Heart left ventricle (tissue), 16 donors: ENCODE measurements at regions of chr6 and their contacts with region 1.

Region 1: DNA sequence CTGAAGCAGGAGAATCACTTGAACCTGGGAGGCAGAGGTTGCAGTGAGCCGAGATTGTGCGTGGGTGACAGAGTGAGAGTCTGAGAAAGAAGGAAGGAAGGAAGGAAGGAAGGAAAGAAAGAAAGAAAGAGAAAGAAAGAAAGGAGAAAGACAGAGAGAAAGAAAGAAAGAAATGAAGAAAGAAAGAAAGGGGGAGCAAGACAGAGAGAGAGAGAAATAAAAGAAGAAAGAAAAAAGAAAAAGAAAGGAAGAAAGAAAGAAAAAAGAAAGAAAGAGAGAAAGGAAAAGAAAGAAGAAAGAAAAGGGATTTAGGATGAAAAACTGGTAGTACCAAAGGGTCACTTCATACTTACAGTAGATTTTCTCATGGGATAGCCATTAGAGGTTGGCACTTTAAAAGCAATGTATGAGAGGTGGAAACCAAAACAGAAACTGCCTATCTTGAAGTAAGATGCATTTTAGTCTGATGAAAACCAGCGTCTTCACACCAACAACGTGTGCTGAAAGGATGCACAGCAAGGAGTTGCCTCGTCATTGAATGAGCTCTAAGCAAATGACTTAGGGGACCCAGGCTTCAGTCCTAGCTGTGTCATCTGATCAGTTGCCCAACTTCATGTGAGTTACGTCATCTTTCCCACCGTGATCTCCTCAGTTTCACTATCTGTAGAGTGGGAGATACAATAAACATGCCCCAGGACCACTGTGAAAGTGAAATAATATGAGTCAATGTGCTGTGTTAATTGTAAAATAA is 133.9 kb upstream of the NEDD9 start:
- DNase-seq: no peak
- ATAC-seq: no peak
- H3K4me3 ChIP-seq: no peak overlapping the region
- H3K27ac ChIP-seq: peak overlapping the region; percentile 71 to 95 (median 86)
- H3K4me1 ChIP-seq: peaks cover 4 to 74% (median 40%) of the 10 kb centered on the region in 12 donors
- H3K27me3 ChIP-seq: no peaks in the 10 kb centered on the region
- CTCF ChIP-seq: no peak
- POLR2A ChIP-seq: no peak

Region 2: GRCh38 chr6:11212625-11213024 is 153.7 kb before region 1 on chr6:
- intact Hi-C with region 1: loop called in 1 of 10 experiments (anchors 10 kb)
- DNase-seq: peak in 4 of 5 donors; percentile 44 to 64 (median 52)
- ATAC-seq: peak in 3 of 4 donors; percentile 62 to 73 (median 63)
- H3K4me3 ChIP-seq: no peak overlapping the region
- H3K27ac ChIP-seq: peak overlapping the region; percentile 47 to 93 (median 80)
- H3K4me1 ChIP-seq: peaks cover 11 to 100% (median 90%) of the 10 kb centered on the region in 12 donors
- H3K27me3 ChIP-seq: no peaks in the 10 kb centered on the region
- CTCF ChIP-seq: no peak
- POLR2A ChIP-seq: no peak

Region 3: GRCh38 chr6:11218538-11219399 is 147.6 kb before region 1 on chr6:
- intact Hi-C with region 1: loop called in 4 of 10 experiments (anchors 2 to 10 kb)
- DNase-seq: peak in 4 of 5 donors; percentile 74 to 85 (median 81)
- ATAC-seq: peak; percentile 73 to 92 (median 82)
- H3K4me3 ChIP-seq: peak overlapping the region in 5 of 12 donors; percentile 0 to 13 (median 2)
- H3K27ac ChIP-seq: peak overlapping the region; percentile 28 to 93 (median 82)
- H3K4me1 ChIP-seq: peaks cover 5 to 100% (median 77%) of the 10 kb centered on the region in 12 donors
- H3K27me3 ChIP-seq: no peaks in the 10 kb centered on the region
- CTCF ChIP-seq: peak in 1 of 12 donors; percentile 18
- POLR2A ChIP-seq: peak in 1 of 2 donors; percentile 44

Region 4: DNA sequence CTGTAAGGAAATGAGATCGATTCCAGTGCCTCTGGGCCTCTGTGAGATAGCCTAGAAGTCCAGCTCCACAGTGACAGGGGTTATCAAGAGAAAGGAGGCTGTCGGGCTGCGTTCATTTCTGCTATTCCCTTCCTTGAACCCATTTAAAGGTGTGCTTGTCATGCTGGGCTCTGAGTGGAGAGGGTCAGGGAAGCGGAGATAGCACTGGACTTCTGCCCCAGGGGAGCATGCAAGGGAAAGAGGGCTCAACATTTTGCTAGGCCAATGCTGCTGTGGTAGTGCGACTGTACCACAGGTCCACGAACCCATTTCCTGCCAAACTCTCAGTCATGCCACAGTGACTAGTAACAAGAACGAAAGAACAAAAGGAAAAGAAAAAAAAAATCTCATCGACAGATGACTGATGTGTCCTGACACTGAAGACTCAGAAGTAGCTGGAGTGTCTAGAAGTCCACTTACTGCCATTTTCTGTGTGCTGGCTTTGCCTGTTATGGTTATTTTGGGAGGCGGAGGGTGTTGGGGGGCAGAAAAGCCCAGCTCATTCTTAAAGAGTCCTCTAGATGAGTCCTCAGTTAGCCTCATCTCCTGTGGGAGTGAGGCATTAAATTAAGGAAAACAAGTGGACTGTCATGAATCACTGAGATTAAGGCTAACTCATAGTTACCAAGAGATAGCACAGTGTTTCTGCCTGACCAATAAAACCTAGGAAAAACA is 141.9 kb before region 1 on chr6:
- intact Hi-C with region 1: loop called in 4 of 10 experiments (anchors 2 to 10 kb)
- DNase-seq: no peak
- ATAC-seq: peak in 3 of 4 donors; percentile 3 to 35 (median 32)
- H3K4me3 ChIP-seq: peak overlapping the region in 9 of 12 donors; percentile 0 to 27 (median 18)
- H3K27ac ChIP-seq: peak overlapping the region; percentile 34 to 93 (median 78)
- H3K4me1 ChIP-seq: peaks cover 0 to 80% (median 30%) of the 10 kb centered on the region in 12 donors
- H3K27me3 ChIP-seq: no peaks in the 10 kb centered on the region
- CTCF ChIP-seq: no peak
- POLR2A ChIP-seq: no peak

Region 5: DNA sequence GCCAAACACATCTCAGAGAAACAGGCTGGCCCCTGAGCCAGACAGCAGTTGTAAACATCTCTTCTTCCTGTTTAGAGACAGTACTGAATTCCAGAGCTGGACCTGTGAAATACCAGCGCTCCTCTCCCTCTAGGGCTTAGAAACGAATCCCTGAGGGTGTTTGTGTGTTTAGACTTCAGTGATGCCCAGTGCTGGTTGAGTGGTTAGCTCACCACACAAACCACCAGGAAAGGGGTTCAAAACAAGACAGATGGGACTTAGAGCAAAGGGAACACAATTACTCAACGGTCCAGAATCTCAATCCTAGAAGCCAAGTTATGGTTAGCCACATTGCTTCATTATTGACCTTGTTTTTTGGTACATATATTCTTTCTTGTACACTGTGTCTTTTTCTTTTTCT is 62.5 kb after region 1 on chr6:
- intact Hi-C with region 1: loop called in 3 of 10 experiments (anchors 5 kb)
- DNase-seq: no peak
- ATAC-seq: no peak
- H3K4me3 ChIP-seq: no peak overlapping the region
- H3K27ac ChIP-seq: peak overlapping the region in 10 of 12 donors; percentile 6 to 66 (median 48)
- H3K4me1 ChIP-seq: peaks cover 0 to 51% (median 33%) of the 10 kb centered on the region in 12 donors
- H3K27me3 ChIP-seq: no peaks in the 10 kb centered on the region
- CTCF ChIP-seq: no peak
- POLR2A ChIP-seq: no peak

Region 6: DNA sequence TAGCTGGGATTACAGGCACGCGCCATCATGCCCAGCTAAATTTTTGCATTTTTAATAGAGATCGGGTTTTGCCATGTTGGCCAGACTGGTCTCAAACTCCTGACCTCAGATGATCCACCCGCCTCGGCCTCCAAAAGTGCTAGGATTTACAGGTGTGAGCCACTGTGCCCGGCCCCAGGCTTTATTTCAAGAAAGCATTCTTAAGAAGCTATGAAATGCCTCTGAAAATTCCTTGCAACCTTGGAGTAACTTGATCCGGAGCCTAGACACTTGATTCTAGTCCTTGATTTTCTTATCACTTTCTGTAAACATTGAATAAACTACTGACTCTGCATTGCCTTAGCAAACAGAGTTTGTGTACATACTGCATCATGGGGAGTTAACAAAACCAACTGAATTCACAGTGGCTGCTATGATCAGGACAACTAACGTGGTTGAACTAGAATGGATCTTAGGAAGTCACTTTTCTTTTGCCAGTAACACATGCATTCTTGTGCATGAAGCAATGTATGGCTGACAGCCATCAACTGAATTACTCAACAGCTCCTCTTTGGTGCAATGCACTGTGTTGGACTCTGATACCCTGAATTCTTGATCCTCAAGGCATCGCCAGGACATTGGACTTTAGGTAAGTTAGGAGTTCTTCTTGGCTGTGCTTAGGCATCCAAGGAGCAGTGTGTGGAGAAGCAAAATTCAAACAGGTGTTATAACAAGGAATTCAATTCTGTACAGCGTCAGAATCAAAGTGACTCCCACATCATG is 68.4 kb after region 1 on chr6:
- intact Hi-C with region 1: loop called in 2 of 10 experiments (anchors 5 kb)
- DNase-seq: no peak
- ATAC-seq: peak in 1 of 4 donors; percentile 12
- H3K4me3 ChIP-seq: no peak overlapping the region
- H3K27ac ChIP-seq: peak overlapping the region in 3 of 12 donors; percentile 70 to 81 (median 80)
- H3K4me1 ChIP-seq: peaks cover 0 to 53% (median 20%) of the 10 kb centered on the region in 12 donors
- H3K27me3 ChIP-seq: no peaks in the 10 kb centered on the region
- CTCF ChIP-seq: no peak
- POLR2A ChIP-seq: no peak

Region 7: DNA sequence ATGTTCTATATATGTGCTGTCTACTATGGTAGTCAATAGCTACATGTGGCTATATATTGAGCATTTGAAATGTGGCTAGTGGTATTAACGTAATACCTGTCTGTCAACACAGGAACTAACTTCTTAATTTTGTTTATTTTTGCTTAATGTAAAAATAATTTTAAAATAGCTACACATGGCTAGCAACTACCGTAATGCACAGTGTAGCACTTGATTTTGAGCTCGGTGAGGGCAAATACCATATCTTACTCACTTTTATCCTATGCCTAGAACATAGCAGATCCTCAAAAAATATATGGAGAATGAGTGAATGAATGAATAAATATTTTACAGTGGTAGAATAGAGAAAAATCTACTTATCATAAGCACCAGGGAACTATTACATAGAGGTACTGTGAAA is 143.1 kb after region 1 on chr6:
- intact Hi-C with region 1: no loop called
- DNase-seq: no peak
- ATAC-seq: no peak
- H3K4me3 ChIP-seq: no peak overlapping the region
- H3K27ac ChIP-seq: no peak overlapping the region
- H3K4me1 ChIP-seq: no peaks in the 10 kb centered on the region
- H3K27me3 ChIP-seq: no peaks in the 10 kb centered on the region
- CTCF ChIP-seq: no peak
- POLR2A ChIP-seq: no peak